Caco-2 (cell line): ENCODE measurements at regions of chr20 and their contacts with region 1.

Region 1: GRCh38 chr20:25247956-25248785 is at the start of gene PYGB:
- DNase-seq: peak; percentile 81 to 82
- H3K4me3 ChIP-seq: peak within 1 kb of the TSS; percentile 97
- H3K4me3 Mint-ChIP-seq: peak within 1 kb of the TSS; percentile 91
- H3K27ac Mint-ChIP-seq: peak within 1 kb of the TSS; percentile 79
- H3K4me1 ChIP-seq: peaks cover 30% of the 10 kb centered on the region
- H3K4me1 Mint-ChIP-seq: peaks cover 15% of the 10 kb centered on the region
- H3K27me3 ChIP-seq: no peaks in the 10 kb centered on the region
- H3K27me3 Mint-ChIP-seq: no peaks in the 10 kb centered on the region
- CTCF ChIP-seq: no peak
- total RNA-seq, gene PYGB: 67.9 and 78.9 TPM in 2 replicates

Region 2: GRCh38 chr20:24992487-24993205 is 255.5 kb before region 1 on chr20 and contains the start of gene APMAP:
- CTCF ChIA-PET with region 1: interaction called, 5 read pairs
- POLR2A ChIA-PET with region 1: no interaction called
- intact Hi-C with region 1: loop called (anchors 5 kb)
- DNase-seq: peak; percentile 92 to 96
- H3K4me3 ChIP-seq: peak within 1 kb of the TSS; percentile 78
- H3K4me3 Mint-ChIP-seq: peak within 1 kb of the TSS; percentile 93
- H3K27ac Mint-ChIP-seq: peak within 1 kb of the TSS; percentile 95
- H3K4me1 ChIP-seq: peaks cover 34% of the 10 kb centered on the region
- H3K4me1 Mint-ChIP-seq: peaks cover 35% of the 10 kb centered on the region
- H3K27me3 ChIP-seq: no peaks in the 10 kb centered on the region
- H3K27me3 Mint-ChIP-seq: no peaks in the 10 kb centered on the region
- CTCF ChIP-seq: no peak
- total RNA-seq, gene APMAP: 119 and 138 TPM in 2 replicates

Region 3: DNA sequence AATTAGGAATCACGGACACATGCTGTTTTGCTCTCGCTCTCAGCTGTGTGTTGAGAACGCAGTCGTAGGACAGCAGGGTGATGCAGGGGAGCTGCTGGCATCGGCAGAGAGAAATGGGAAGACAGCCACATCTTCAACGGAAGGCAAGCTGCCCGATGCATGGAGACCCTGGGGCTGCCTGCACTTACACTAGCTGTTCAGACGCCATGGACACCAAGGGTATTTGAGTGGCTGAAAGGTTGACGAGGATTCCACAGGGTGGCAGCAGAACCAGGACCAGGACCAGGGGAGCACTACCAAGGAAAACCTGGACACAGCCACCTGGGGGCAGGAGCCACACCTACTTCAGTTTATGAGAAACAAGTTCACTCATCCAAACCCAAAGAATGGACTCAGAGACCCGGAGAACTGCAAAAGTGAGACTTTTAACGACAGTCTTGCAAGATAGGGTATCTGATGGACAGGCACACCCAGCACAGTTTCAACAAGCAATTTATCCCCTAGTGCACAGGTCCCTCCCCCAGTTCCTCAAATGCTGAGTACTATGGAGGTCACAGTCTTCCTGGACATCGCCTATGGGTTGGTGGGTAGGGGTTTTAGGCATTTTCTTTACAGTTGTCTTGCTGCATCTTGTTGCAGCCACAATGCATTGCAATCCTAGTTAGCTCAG is 109.0 kb before region 1 on chr20:
- CTCF ChIA-PET with region 1: no interaction called
- POLR2A ChIA-PET with region 1: no interaction called
- intact Hi-C with region 1: loop called (anchors 1 kb)
- DNase-seq: peak; percentile 66 to 71
- H3K4me3 ChIP-seq: no peak overlapping the region
- H3K4me3 Mint-ChIP-seq: no peak overlapping the region
- H3K27ac Mint-ChIP-seq: no peak overlapping the region
- H3K4me1 ChIP-seq: peaks cover 10% of the 10 kb centered on the region; the same call in 1 of the 2 replicates
- H3K4me1 Mint-ChIP-seq: peaks cover 11% of the 10 kb centered on the region
- H3K27me3 ChIP-seq: no peaks in the 10 kb centered on the region
- H3K27me3 Mint-ChIP-seq: peaks cover 3% of the 10 kb centered on the region
- CTCF ChIP-seq: peak; percentile 16 to 71

Region 4: GRCh38 chr20:25223179-25223661 is 25.0 kb before region 1 on chr20:
- CTCF ChIA-PET with region 1: interaction called, 23 read pairs
- POLR2A ChIA-PET with region 1: interaction called, 4 read pairs
- intact Hi-C with region 1: no loop called
- DNase-seq: peak in 1 of 2 experiments; percentile 46
- H3K4me3 ChIP-seq: no peak overlapping the region
- H3K4me3 Mint-ChIP-seq: no peak overlapping the region
- H3K27ac Mint-ChIP-seq: peak overlapping the region; percentile 32
- H3K4me1 ChIP-seq: peaks cover 3% of the 10 kb centered on the region; the same call in 1 of the 2 replicates
- H3K4me1 Mint-ChIP-seq: peaks cover 17% of the 10 kb centered on the region
- H3K27me3 ChIP-seq: no peaks in the 10 kb centered on the region
- H3K27me3 Mint-ChIP-seq: no peaks in the 10 kb centered on the region
- CTCF ChIP-seq: peak in 1 of 2 experiments; percentile 44

Region 5: GRCh38 chr20:25310268-25310920 is 62.2 kb after region 1 on chr20:
- CTCF ChIA-PET with region 1: no interaction called
- POLR2A ChIA-PET with region 1: no interaction called
- intact Hi-C with region 1: loop called (anchors 5 kb)
- DNase-seq: peak; percentile 87 to 90
- H3K4me3 ChIP-seq: no peak overlapping the region
- H3K4me3 Mint-ChIP-seq: peak overlapping the region; percentile 51
- H3K27ac Mint-ChIP-seq: peak overlapping the region; percentile 87
- H3K4me1 ChIP-seq: peaks cover 31% of the 10 kb centered on the region
- H3K4me1 Mint-ChIP-seq: peaks cover 28% of the 10 kb centered on the region
- H3K27me3 ChIP-seq: no peaks in the 10 kb centered on the region
- H3K27me3 Mint-ChIP-seq: no peaks in the 10 kb centered on the region
- CTCF ChIP-seq: peak; percentile 57 to 91